ENCODE measurements at regions of chr10 and their contacts with region 1.

Region 1: GRCh38 chr10:25080880-25081581 is 64.6 kb downstream of the THNSL1 start:
- DNase-seq: peak; percentile 69
- ATAC-seq: peak; percentile 88
- H3K4me3 Mint-ChIP-seq: no peak overlapping the region
- H3K27ac Mint-ChIP-seq: no peak overlapping the region
- H3K4me1 Mint-ChIP-seq: peaks cover 6% of the 10 kb centered on the region
- H3K27me3 Mint-ChIP-seq: peaks cover 12% of the 10 kb centered on the region

Region 2: GRCh38 chr10:24642622-24643417 is 438.2 kb before region 1 on chr10:
- CTCF ChIA-PET with region 1: interaction called, 18 read pairs
- POLR2A ChIA-PET with region 1: no interaction called
- DNase-seq: peak; percentile 44
- ATAC-seq: peak; percentile 69
- H3K4me3 Mint-ChIP-seq: no peak overlapping the region
- H3K27ac Mint-ChIP-seq: no peak overlapping the region
- H3K4me1 Mint-ChIP-seq: peaks cover 2% of the 10 kb centered on the region
- H3K27me3 Mint-ChIP-seq: no peaks in the 10 kb centered on the region

Region 3: DNA sequence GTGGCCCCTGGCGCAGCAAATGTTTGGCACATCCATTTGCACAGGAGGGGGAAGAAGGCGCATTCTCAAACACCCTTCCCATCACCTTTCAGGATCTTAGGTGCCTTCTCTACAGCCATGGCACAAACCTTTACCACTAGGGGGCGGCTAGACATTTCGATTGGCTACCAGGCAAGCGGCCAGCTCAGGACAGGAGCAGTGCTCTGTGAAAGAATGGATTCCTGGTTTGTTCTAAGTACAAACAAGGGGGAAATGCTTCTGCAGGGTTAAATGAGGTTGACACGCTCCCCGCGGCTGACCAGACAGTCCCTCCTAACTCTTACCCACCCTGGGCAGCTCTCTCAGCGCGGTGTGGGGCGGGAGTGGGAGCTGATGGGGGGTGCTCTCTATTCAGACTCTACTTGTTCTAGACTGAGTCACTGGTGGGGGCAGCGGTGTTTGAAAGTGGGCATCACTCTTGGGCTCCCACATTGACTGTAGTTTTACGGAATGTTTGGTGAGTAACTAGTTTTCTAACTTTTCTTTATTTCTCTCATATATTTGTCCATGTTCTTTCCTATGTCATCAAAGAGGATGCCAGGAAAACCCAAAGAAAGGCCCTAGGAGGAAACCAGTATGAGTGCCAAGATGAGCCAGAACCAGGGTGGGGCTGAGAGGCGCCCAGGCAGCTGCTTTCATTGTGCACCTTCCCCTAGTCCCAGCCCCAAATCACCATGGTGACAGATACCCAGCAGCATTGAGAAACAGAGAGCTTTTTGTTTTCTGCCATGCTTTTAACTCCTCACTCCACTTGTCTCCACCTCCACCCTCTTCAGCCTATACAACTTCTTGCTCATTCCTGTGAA is 32.4 kb after region 1 on chr10:
- CTCF ChIA-PET with region 1: no interaction called
- POLR2A ChIA-PET with region 1: no interaction called
- DNase-seq: peak; percentile 59
- ATAC-seq: peak; percentile 81
- H3K4me3 Mint-ChIP-seq: no peak overlapping the region
- H3K27ac Mint-ChIP-seq: no peak overlapping the region
- H3K4me1 Mint-ChIP-seq: no peaks in the 10 kb centered on the region
- H3K27me3 Mint-ChIP-seq: peaks cover 4% of the 10 kb centered on the region

Measured in activated CD8-positive, alpha-beta T cell treated with anti-CD3 and anti-CD28 coated beads, Interleukin-2, amount 10 ng/mL, durations not matched to agents 7 days and 5 days (primary cell).